ENCODE measurements at regions of chr3 and their contacts with region 1.

Region 1: GRCh38 chr3:56775838-56776555 is 25.8 kb downstream of the ARHGEF3 start:
- DNase-seq: no peak
- ATAC-seq: peak in 1 of 2 donors; percentile 57

Region 2: DNA sequence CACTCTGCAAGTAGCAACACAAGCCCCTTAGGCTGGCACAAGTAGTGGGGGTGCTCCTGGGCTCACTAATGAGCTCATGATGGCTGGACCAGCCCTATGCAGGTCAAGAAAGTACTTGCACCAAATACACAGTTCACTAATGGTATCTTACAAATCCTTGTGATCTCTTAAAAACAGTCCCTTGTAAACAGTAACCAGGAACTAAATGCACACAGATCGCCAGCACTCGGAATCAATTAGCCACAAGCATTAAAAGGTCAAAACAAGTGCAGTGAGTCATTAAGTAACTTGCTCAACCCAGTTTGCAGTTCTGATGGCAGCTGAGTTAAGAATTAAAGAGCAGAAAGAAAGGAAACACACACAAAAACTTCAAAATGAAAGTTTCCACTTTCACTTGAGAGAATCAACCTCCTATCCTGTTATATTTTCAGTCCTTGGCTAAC is 17.4 kb before region 1 on chr3:
- intact Hi-C with region 1: loop called in 1 of 2 experiments (anchors 2 kb)
- DNase-seq: no peak
- ATAC-seq: peak in 1 of 2 donors; percentile 47